Caco-2 (cell line): ENCODE measurements at regions of chr2 and their contacts with region 1.

Region 1: GRCh38 chr2:168118733-168119514 is 128.5 kb downstream of the STK39 start:
- DNase-seq: peak in 1 of 2 experiments; percentile 79
- H3K4me3 ChIP-seq: no peak overlapping the region
- H3K4me3 Mint-ChIP-seq: no peak overlapping the region
- H3K27ac Mint-ChIP-seq: no peak overlapping the region
- H3K4me1 ChIP-seq: no peaks in the 10 kb centered on the region
- H3K4me1 Mint-ChIP-seq: no peaks in the 10 kb centered on the region
- H3K27me3 ChIP-seq: no peaks in the 10 kb centered on the region
- H3K27me3 Mint-ChIP-seq: no peaks in the 10 kb centered on the region
- CTCF ChIP-seq: peak; percentile 59 to 71

Region 2: DNA sequence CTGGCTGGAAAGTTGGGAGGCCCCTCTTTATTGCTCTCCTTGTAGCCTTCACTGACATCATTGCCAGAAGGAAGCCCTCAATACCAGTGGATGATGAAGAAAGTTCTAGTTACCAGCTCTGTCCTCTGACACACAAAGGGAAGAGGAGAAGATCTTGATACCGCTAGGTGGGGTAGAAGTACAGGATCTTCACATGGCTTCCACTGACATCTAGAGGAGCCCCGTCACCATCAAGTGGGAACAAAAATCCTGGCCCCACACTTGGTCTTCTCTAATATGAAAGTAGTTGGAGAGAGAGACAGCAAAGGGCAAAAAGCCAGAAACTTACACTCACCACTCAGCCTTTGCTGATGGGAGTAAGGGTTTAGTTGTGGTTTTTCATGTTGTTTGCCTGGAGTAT is 1218.2 kb before region 1 on chr2:
- CTCF ChIA-PET with region 1: interaction called, 3 read pairs
- POLR2A ChIA-PET with region 1: no interaction called
- intact Hi-C with region 1: loop called (anchors 2 kb)
- DNase-seq: peak in 1 of 2 experiments; percentile 28
- H3K4me3 ChIP-seq: no peak overlapping the region
- H3K4me3 Mint-ChIP-seq: no peak overlapping the region
- H3K27ac Mint-ChIP-seq: no peak overlapping the region
- H3K4me1 ChIP-seq: no peaks in the 10 kb centered on the region
- H3K4me1 Mint-ChIP-seq: no peaks in the 10 kb centered on the region
- H3K27me3 ChIP-seq: no peaks in the 10 kb centered on the region
- H3K27me3 Mint-ChIP-seq: no peaks in the 10 kb centered on the region
- CTCF ChIP-seq: peak; percentile 40 to 52

Region 3: DNA sequence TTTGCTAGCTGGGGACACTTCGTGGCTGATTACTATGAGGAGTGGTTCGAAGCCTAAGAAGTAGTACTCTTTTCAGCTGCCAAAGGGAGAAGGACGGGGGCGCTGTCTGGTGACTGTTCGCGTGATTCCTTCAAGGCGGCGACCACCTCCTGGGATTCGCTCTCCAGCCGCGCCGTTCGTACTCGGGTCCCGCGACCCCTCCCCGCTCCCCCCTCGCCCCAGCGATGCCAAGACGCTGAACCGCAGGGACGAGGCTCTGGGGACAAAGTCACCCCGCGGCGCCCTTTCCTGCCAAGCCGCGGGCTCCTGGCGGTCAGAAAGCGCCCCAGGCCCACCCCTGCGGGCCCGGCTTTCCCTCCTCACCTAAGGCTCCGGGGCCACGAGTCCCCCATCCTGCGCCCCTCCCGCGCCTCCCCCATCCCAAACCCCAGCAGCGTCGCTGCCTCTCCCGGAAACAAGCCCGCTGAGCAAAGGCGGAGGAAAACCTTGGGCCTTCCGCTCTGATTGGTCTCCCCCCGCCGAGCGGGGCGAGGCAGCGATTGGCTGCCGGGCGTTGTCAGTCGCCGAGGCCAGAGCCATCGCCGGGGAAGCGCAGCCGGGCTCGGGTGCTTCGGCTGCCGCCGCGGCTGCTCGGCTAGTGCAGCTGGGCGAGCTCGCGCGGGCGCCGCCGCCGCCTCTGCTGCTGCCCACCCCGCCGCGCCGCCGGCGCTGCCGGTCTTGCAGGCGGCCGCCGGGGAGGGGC is 826.3 kb before region 1 on chr2:
- CTCF ChIA-PET with region 1: no interaction called
- POLR2A ChIA-PET with region 1: no interaction called
- intact Hi-C with region 1: loop called (anchors 2 kb)
- DNase-seq: peak; percentile 82 to 88
- H3K4me3 ChIP-seq: peak within 1 kb of the TSS; percentile 66
- H3K4me3 Mint-ChIP-seq: peak within 1 kb of the TSS; percentile 76
- H3K27ac Mint-ChIP-seq: no peak within 1 kb of the TSS
- H3K4me1 ChIP-seq: peaks cover 5% of the 10 kb centered on the region; the same call in 1 of the 2 replicates
- H3K4me1 Mint-ChIP-seq: peaks cover 7% of the 10 kb centered on the region
- H3K27me3 ChIP-seq: peaks cover 1% of the 10 kb centered on the region; the same call in 1 of the 2 replicates
- H3K27me3 Mint-ChIP-seq: peaks cover 32% of the 10 kb centered on the region
- CTCF ChIP-seq: peak; percentile 47 to 52

Region 4: DNA sequence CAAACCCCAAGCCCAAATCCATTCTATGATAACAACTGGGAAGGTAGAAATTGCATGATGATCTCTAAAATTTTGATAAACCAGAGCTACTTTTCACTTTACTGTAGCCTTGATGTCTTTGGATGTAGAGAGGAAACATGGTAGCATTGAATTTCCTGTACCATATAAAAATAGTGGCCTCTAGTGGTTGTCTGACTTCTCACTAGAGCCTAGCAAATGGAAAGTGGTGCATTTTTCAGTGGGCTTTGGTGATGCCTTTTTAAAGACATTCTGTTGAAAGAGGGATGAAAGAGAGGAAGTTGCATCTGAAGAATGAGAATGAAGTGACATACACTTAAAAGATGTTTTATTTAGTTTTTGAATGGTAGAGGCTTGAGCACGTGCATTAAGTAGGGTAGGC is 568.5 kb before region 1 on chr2:
- CTCF ChIA-PET with region 1: no interaction called
- POLR2A ChIA-PET with region 1: no interaction called
- intact Hi-C with region 1: loop called (anchors 10 kb)
- DNase-seq: peak in 1 of 2 experiments; percentile 14
- H3K4me3 ChIP-seq: no peak overlapping the region
- H3K4me3 Mint-ChIP-seq: no peak overlapping the region
- H3K27ac Mint-ChIP-seq: no peak overlapping the region
- H3K4me1 ChIP-seq: no peaks in the 10 kb centered on the region
- H3K4me1 Mint-ChIP-seq: no peaks in the 10 kb centered on the region
- H3K27me3 ChIP-seq: no peaks in the 10 kb centered on the region
- H3K27me3 Mint-ChIP-seq: peaks cover 3% of the 10 kb centered on the region
- CTCF ChIP-seq: peak; percentile 38 to 46

Region 5: DNA sequence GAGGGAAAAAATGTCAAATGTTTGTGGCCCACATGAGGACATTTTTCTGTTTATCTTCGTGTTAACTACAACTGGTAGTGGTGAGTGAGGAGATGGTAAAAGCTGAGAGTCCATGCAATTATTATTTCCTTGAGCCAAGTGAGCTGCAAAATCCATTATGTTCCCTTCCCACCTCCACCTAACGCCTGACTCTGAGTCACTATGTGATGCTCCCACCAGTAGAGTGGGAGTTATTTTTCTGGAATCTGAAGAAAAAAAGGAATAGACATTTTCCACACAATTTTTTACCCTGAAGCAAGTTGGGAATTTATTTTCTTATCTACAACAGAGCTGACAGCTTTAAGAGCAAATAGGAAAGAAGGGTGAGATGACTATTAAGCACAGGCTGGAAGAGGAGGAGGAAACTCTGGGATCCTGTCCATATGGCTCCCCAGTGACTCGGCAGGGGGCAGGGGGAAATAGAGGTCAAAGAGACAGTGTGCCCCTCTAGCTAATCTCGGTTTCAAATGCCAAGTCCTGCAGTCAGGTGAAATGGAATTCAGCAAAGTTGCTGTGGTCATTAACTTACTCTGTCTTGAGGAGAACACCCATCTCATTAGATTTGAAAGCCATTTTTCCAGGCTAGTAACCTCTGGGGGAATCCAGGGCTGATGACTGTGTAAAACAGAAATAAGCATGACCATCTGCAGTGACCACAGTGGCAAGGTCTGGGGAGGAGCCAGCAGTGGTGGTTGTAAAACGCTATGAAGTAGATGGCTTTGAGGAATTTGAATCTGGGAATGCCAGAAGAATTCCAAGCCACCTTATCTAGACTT is 335.5 kb before region 1 on chr2:
- CTCF ChIA-PET with region 1: no interaction called
- POLR2A ChIA-PET with region 1: no interaction called
- intact Hi-C with region 1: loop called (anchors 10 kb)
- DNase-seq: no peak
- H3K4me3 ChIP-seq: no peak overlapping the region
- H3K4me3 Mint-ChIP-seq: no peak overlapping the region
- H3K27ac Mint-ChIP-seq: no peak overlapping the region
- H3K4me1 ChIP-seq: peaks cover 8% of the 10 kb centered on the region; the same call in 1 of the 2 replicates
- H3K4me1 Mint-ChIP-seq: no peaks in the 10 kb centered on the region
- H3K27me3 ChIP-seq: no peaks in the 10 kb centered on the region
- H3K27me3 Mint-ChIP-seq: peaks cover 12% of the 10 kb centered on the region
- CTCF ChIP-seq: no peak

Region 6: GRCh38 chr2:167964650-167965413 is 154.1 kb before region 1 on chr2:
- CTCF ChIA-PET with region 1: interaction called, 17 read pairs
- POLR2A ChIA-PET with region 1: no interaction called
- intact Hi-C with region 1: loop called (anchors 1 kb)
- DNase-seq: no peak
- H3K4me3 ChIP-seq: no peak overlapping the region
- H3K4me3 Mint-ChIP-seq: no peak overlapping the region
- H3K27ac Mint-ChIP-seq: no peak overlapping the region
- H3K4me1 ChIP-seq: no peaks in the 10 kb centered on the region
- H3K4me1 Mint-ChIP-seq: no peaks in the 10 kb centered on the region
- H3K27me3 ChIP-seq: no peaks in the 10 kb centered on the region
- H3K27me3 Mint-ChIP-seq: no peaks in the 10 kb centered on the region
- CTCF ChIP-seq: peak; percentile 42 to 45